Activated CD8-positive, alpha-beta T cell treated with anti-CD3 and anti-CD28 coated beads for 36 hours (primary cell): ENCODE measurements at regions of chr18 and their contacts with region 1.

Region 1: GRCh38 chr18:12271376-12272235 is 17.4 kb downstream of the CIDEA start:
- DNase-seq: peak; percentile 62
- ATAC-seq: peak; percentile 91
- H3K4me3 Mint-ChIP-seq: peak overlapping the region; percentile 56
- H3K27ac Mint-ChIP-seq: no peak overlapping the region
- H3K4me1 Mint-ChIP-seq: no peaks in the 10 kb centered on the region
- H3K27me3 Mint-ChIP-seq: peaks cover 3% of the 10 kb centered on the region
- CTCF ChIP-seq: peak; percentile 64

Region 2: DNA sequence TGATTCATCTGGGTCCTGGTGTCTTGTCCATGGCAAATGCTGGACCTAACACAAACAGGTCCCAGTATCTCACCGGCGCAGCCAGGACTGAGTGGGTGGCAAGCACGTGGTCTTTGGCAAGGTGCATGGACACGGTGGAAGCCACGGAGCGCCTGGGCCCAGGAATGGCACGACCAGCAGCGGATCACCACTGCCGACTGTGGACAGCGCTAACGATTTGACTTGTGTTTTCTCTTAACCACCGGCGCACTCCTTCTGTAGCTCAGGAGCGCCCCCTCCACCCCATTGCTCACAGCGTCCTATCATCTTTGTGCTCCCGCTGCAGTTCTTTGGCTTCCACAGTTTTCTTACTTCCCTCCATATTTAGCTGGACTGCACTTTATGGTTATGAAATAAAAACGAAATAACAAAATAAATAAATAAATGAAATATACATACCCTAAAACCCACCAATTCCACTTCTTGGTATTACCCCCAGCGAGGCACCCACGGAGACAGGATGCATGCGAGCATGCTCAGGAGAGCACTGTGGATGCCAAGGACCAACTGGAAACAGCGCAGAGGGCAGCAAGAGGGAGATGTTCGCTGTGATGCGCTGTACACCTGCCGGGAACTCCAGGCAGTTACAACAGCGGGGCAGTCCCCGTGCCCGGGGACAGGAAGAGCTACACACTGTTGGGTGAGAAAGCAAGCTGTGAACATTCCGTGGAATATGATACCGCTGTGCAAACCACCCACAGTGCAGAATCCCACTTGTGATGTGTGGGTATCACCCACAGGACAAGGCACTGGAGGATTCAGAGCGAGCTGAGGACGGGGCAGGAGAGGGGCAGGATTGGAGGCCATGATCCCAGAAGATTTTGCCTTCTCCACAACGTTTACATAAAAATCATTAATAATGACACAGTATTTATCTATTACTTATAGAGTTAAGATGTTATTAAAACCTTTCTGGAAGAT is 24.5 kb before region 1 on chr18:
- CTCF ChIA-PET with region 1: interaction called, 10 read pairs
- POLR2A ChIA-PET with region 1: no interaction called
- intact Hi-C with region 1: no loop called
- DNase-seq: peak; percentile 22
- ATAC-seq: no peak
- H3K4me3 Mint-ChIP-seq: no peak overlapping the region
- H3K27ac Mint-ChIP-seq: no peak overlapping the region
- H3K4me1 Mint-ChIP-seq: no peaks in the 10 kb centered on the region
- H3K27me3 Mint-ChIP-seq: peaks cover 15% of the 10 kb centered on the region
- CTCF ChIP-seq: peak; percentile 17

Region 3: GRCh38 chr18:12254136-12254829 is 17.3 kb before region 1 on chr18 and contains the start of gene CIDEA:
- CTCF ChIA-PET with region 1: interaction called, 21 read pairs
- POLR2A ChIA-PET with region 1: no interaction called
- intact Hi-C with region 1: no loop called
- DNase-seq: no peak
- ATAC-seq: no peak
- H3K4me3 Mint-ChIP-seq: no peak within 1 kb of the TSS
- H3K27ac Mint-ChIP-seq: no peak within 1 kb of the TSS
- H3K4me1 Mint-ChIP-seq: no peaks in the 10 kb centered on the region
- H3K27me3 Mint-ChIP-seq: peaks cover 52% of the 10 kb centered on the region
- CTCF ChIP-seq: no peak
- total RNA-seq, gene CIDEA: not detected

Region 4: DNA sequence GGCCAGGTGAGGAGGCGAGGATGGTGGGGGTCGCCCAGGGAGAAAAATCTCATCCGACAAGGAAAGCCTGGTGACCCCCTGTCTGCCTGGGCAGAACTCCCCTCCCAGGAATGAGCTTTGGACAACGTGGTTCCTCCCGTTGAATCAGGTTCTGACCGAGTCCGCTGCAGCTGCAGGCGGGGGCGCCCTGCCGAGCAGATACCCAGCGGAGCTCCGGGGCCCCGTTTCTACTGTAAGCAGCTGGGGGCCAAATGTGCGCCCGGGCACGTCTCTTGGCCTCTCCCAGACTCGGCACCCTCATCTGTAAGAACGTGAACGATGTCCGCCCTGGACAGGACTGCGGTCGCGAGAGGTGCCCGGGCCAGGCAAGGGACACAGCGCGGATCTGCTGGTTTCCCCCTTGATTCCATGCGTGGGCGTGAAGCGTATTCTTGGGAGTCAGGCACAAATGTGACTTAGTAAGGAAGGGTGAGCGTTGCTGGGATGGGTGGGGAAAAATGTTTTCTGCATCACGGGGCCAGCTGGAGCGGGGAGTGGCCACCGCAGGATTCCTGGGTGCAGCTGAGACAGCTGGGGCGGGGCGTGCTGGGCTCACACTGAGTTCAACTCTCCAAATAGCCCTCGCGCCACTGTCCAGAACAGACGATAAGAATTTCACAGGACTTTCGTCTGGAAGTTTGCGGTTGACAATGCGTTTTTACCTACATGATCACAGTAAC is 16.2 kb after region 1 on chr18:
- CTCF ChIA-PET with region 1: interaction called, 16 read pairs
- POLR2A ChIA-PET with region 1: no interaction called
- intact Hi-C with region 1: no loop called
- DNase-seq: peak; percentile 20
- ATAC-seq: peak; percentile 13
- H3K4me3 Mint-ChIP-seq: no peak overlapping the region
- H3K27ac Mint-ChIP-seq: no peak overlapping the region
- H3K4me1 Mint-ChIP-seq: peaks cover 4% of the 10 kb centered on the region
- H3K27me3 Mint-ChIP-seq: peaks cover 23% of the 10 kb centered on the region
- CTCF ChIP-seq: no peak

Region 5: GRCh38 chr18:12317664-12318333 is 46.2 kb after region 1 on chr18:
- CTCF ChIA-PET with region 1: interaction called, 13 read pairs
- POLR2A ChIA-PET with region 1: no interaction called
- intact Hi-C with region 1: no loop called
- DNase-seq: no peak
- ATAC-seq: no peak
- H3K4me3 Mint-ChIP-seq: no peak overlapping the region
- H3K27ac Mint-ChIP-seq: no peak overlapping the region
- H3K4me1 Mint-ChIP-seq: no peaks in the 10 kb centered on the region
- H3K27me3 Mint-ChIP-seq: no peaks in the 10 kb centered on the region
- CTCF ChIP-seq: no peak

Region 6: DNA sequence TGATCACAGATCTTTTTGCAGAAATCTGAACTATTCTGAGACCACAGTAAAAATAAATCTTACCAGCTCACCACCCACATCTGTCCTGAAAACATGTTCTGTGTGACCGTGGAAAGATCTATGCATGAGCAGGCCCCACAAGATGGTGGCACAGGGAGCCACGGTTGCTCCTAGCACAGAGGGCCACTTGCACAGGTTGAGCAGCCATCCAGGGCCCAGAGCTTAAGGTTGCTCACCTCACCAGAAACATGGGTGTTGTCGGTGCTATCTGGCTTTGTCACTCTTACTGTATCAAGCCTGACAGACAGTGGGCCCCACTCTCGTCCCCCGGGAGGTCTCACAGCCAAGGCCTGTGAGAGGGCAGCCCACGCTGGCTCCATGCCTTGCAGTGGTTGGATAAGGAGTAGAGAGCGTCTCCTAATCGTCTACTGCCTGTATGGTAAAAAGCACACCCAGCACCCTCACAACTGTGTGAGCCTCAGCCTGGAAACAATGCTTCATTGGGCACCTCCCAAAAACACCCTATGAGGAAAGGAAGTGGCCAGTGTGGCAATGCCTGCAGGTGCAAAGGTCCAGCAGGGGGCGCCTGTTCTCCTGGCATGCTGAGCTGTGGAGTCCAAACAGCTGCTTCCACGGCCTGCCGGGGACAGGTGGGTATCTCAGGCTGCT is 56.0 kb after region 1 on chr18:
- CTCF ChIA-PET with region 1: interaction called, 11 read pairs
- POLR2A ChIA-PET with region 1: no interaction called
- intact Hi-C with region 1: no loop called
- DNase-seq: peak; percentile 89
- ATAC-seq: peak; percentile 97
- H3K4me3 Mint-ChIP-seq: no peak overlapping the region
- H3K27ac Mint-ChIP-seq: no peak overlapping the region
- H3K4me1 Mint-ChIP-seq: peaks cover 7% of the 10 kb centered on the region
- H3K27me3 Mint-ChIP-seq: no peaks in the 10 kb centered on the region
- CTCF ChIP-seq: peak; percentile 74

Region 7: GRCh38 chr18:12345491-12346239 is 74.1 kb after region 1 on chr18:
- CTCF ChIA-PET with region 1: no interaction called
- POLR2A ChIA-PET with region 1: no interaction called
- intact Hi-C with region 1: no loop called
- DNase-seq: no peak
- ATAC-seq: no peak
- H3K4me3 Mint-ChIP-seq: no peak overlapping the region
- H3K27ac Mint-ChIP-seq: no peak overlapping the region
- H3K4me1 Mint-ChIP-seq: no peaks in the 10 kb centered on the region
- H3K27me3 Mint-ChIP-seq: no peaks in the 10 kb centered on the region
- CTCF ChIP-seq: no peak